B cell (primary cell): ENCODE measurements at regions of chr9 and their contacts with region 1.

Region 1: GRCh38 chr9:137223078-137223970 is 1.3 kb upstream of the RNF208 start:
- DNase-seq: peak; percentile 99
- ATAC-seq: peak; percentile 92
- H3K4me3 ChIP-seq: peak overlapping the region; percentile 36 to 77 (median 71)
- H3K4me3 Mint-ChIP-seq: peak overlapping the region; percentile 86
- H3K27ac ChIP-seq: peak overlapping the region; percentile 79 to 91
- H3K27ac Mint-ChIP-seq: peak overlapping the region; percentile 82
- H3K4me1 ChIP-seq: peaks cover 13 to 32% of the 10 kb centered on the region in 2 donors
- H3K4me1 Mint-ChIP-seq: peaks cover 16% of the 10 kb centered on the region
- H3K27me3 ChIP-seq: peaks cover 0 to 12% (median 0%) of the 10 kb centered on the region in 4 experiments
- H3K27me3 Mint-ChIP-seq: peaks cover 4% of the 10 kb centered on the region
- CTCF ChIP-seq: no peak

Region 2: DNA sequence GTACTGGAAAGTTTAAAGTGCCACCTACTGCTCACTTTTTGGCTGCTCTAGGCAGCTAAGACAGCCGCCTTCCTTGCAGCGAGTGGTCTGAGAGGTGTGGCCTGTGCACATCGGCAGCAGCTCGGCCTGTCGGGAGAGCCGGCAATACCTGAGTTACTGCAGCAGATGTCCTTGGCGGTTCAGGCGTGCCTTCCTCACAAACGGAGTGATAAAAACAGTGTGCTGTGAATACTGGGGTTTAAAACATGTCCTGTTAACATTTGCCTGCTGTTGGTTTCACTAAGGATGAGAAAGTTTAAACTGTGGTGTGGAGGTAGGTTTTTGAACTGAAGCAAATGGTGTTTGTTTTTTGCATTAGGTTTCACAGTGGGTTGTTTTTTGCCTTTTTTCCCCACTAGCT is 324.1 kb before region 1 on chr9:
- CTCF ChIA-PET with region 1: no interaction called
- POLR2A ChIA-PET with region 1: no interaction called
- intact Hi-C with region 1: no loop called
- DNase-seq: peak; percentile 38
- ATAC-seq: no peak
- H3K4me3 ChIP-seq: no peak overlapping the region
- H3K4me3 Mint-ChIP-seq: no peak overlapping the region
- H3K27ac ChIP-seq: peak overlapping the region in 1 of 2 donors; percentile 55
- H3K27ac Mint-ChIP-seq: peak overlapping the region; percentile 84
- H3K4me1 ChIP-seq: peaks cover 24 to 45% of the 10 kb centered on the region in 2 donors
- H3K4me1 Mint-ChIP-seq: peaks cover 48% of the 10 kb centered on the region
- H3K27me3 ChIP-seq: no peaks in the 10 kb centered on the region
- H3K27me3 Mint-ChIP-seq: no peaks in the 10 kb centered on the region
- CTCF ChIP-seq: no peak

Region 3: DNA sequence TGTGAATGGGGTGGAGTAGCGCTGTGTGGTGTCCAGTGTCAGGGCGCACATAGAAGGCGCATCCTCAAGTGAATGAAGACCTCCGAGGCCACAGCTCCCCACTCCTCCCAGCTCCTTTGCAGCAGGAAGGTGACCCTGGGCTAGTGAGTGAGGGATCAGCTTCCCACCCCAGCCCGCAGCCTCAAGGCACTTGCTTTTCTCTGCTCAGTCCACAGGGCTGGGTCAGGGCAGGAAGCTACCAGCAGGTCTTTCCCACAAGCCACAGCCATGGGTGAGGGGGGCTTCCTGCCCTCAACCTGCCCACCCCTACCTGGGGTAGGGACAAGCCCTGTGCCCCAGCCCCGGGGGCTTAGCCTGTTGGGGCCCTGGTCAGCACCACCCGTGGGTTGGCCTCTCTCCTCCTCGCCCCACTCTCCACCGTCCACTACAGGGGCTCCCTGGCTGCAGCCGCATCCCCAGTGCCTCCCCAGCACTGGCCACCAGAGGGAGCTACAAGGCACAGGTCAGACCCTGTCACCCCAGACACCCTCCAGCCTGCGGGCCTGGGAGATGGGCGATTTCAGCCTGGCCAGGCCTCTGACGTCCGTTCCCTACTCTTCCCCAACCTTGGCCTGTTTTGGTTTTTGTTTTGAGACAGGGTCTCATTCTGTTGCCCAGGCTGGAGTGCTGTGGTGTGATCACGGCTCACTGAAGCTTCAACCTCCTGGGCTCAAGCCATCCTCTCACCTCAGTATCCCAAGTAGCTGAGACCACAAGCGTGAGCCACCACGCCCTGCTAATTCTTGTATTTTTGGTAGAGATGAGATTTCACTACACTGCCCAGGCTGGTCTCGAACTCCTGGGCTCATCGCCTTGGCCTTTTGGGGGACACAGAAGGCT is 194.0 kb before region 1 on chr9:
- CTCF ChIA-PET with region 1: interaction called, 12 read pairs
- POLR2A ChIA-PET with region 1: interaction called, 5 read pairs
- intact Hi-C with region 1: no loop called
- DNase-seq: peak; percentile 85
- ATAC-seq: peak; percentile 31
- H3K4me3 ChIP-seq: peak overlapping the region; percentile 4 to 77 (median 66)
- H3K4me3 Mint-ChIP-seq: peak overlapping the region; percentile 90
- H3K27ac ChIP-seq: peak overlapping the region in 1 of 2 donors; percentile 71
- H3K27ac Mint-ChIP-seq: peak overlapping the region; percentile 92
- H3K4me1 ChIP-seq: peaks cover 61 to 78% of the 10 kb centered on the region in 2 donors
- H3K4me1 Mint-ChIP-seq: peaks cover 66% of the 10 kb centered on the region
- H3K27me3 ChIP-seq: no peaks in the 10 kb centered on the region
- H3K27me3 Mint-ChIP-seq: no peaks in the 10 kb centered on the region
- CTCF ChIP-seq: peak; percentile 87

Region 4: GRCh38 chr9:137095664-137096517 is 127.4 kb before region 1 on chr9:
- CTCF ChIA-PET with region 1: interaction called, 13 read pairs
- POLR2A ChIA-PET with region 1: no interaction called
- intact Hi-C with region 1: no loop called
- DNase-seq: peak; percentile 70
- ATAC-seq: peak; percentile 96
- H3K4me3 ChIP-seq: peak overlapping the region in 2 of 5 experiments; percentile 15 to 30
- H3K4me3 Mint-ChIP-seq: peak overlapping the region; percentile 72
- H3K27ac ChIP-seq: peak overlapping the region; percentile 41 to 44
- H3K27ac Mint-ChIP-seq: peak overlapping the region; percentile 72
- H3K4me1 ChIP-seq: peaks cover 0 to 12% of the 10 kb centered on the region in 2 donors
- H3K4me1 Mint-ChIP-seq: peaks cover 6% of the 10 kb centered on the region
- H3K27me3 ChIP-seq: no peaks in the 10 kb centered on the region
- H3K27me3 Mint-ChIP-seq: no peaks in the 10 kb centered on the region
- CTCF ChIP-seq: peak; percentile 49

Region 5: DNA sequence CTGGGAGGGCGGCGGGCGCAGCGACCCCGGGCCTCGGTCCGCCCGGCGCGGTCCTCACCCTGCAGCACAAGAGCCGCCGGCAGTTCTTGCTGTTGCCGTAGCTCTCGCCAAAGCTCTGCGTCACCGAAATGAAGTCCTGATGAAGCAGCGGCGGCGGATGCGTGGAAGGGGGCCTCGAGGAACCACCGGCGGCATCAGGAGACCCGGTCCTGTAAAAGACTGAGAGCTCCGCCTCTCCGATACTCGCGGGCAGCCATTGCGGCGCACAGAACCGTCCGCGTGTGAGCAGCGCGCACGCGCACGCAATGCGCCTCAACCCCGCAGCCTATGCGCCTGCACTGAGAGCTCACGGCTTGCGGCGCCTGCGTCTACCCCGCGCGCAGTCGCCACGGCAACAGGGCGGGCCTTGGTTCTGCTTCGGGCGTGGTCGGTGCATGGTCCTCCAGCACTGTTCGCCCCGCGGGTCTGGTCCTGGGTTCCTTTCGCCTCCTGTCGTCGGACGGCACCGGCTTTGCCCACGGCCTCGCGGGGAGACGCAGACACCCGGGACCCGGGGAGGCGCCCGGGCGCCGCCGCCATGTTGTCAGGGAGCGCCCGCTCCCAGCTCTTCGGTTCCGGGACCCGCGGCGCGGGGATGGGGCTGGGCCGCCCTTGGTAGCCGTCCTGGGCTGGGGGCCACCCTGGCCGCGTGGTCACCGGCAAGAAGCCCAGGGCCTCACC is 93.7 kb before region 1 on chr9:
- CTCF ChIA-PET with region 1: interaction called, 8 read pairs
- POLR2A ChIA-PET with region 1: interaction called, 10 read pairs
- intact Hi-C with region 1: no loop called
- DNase-seq: peak; percentile 94
- ATAC-seq: peak; percentile 93
- H3K4me3 ChIP-seq: peak overlapping the region; percentile 8 to 82 (median 73)
- H3K4me3 Mint-ChIP-seq: peak overlapping the region; percentile 89
- H3K27ac ChIP-seq: peak overlapping the region; percentile 71 to 93
- H3K27ac Mint-ChIP-seq: peak overlapping the region; percentile 91
- H3K4me1 ChIP-seq: peaks cover 28 to 32% of the 10 kb centered on the region in 2 donors
- H3K4me1 Mint-ChIP-seq: peaks cover 31% of the 10 kb centered on the region
- H3K27me3 ChIP-seq: peaks cover 0 to 3% (median 0%) of the 10 kb centered on the region in 4 experiments
- H3K27me3 Mint-ChIP-seq: peaks cover 4% of the 10 kb centered on the region
- CTCF ChIP-seq: no peak

Region 6: DNA sequence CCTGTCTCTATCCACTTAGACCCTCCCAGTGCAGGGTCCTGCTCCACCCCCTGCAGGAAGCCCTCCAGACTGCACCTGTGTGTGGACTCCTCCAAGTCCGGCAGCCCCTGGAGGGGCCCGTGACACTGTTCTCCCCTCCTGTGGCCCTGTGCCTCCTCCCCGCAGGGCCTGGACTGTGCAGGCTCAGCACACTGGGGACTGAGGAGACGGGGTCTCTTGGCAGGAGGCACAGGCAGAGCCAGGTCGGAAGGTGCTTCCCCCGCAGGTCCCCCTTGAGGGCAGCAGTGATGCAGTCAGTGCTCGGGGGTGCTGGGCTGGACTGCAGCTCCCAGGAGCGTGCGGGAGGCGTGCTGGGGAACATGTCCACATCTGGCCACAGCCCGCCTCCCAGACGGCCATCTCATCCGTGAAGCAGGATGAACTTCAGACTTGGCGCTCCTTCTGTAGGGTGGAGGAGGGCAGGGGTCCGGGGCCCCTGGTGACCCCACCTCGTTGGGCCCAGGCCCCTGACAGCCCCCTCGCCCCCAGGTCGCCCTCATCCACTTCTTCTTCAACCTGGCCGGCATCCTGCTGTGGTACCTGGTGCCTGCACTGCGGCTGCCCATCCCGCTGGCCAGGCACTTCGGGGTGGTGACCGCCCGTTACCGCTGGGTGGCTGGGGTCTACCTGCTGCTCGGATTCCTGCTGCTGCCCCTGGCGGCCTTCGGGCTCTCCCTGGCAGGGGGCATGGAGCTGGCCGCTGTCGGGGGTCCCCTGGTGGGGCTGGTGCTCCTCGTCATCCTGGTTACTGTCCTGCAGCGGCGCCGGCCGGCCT is 12.3 kb after region 1 on chr9:
- CTCF ChIA-PET with region 1: interaction called, 76 read pairs
- POLR2A ChIA-PET with region 1: interaction called, 11 read pairs
- intact Hi-C with region 1: loop called (anchors 1 kb)
- DNase-seq: peak; percentile 45
- ATAC-seq: no peak
- H3K4me3 ChIP-seq: no peak overlapping the region
- H3K4me3 Mint-ChIP-seq: peak overlapping the region; percentile 65
- H3K27ac ChIP-seq: peak overlapping the region in 1 of 2 donors; percentile 33
- H3K27ac Mint-ChIP-seq: peak overlapping the region; percentile 50
- H3K4me1 ChIP-seq: peaks cover 37 to 62% of the 10 kb centered on the region in 2 donors
- H3K4me1 Mint-ChIP-seq: peaks cover 35% of the 10 kb centered on the region
- H3K27me3 ChIP-seq: peaks cover 0 to 4% (median 0%) of the 10 kb centered on the region in 4 experiments
- H3K27me3 Mint-ChIP-seq: no peaks in the 10 kb centered on the region
- CTCF ChIP-seq: no peak

Region 7: DNA sequence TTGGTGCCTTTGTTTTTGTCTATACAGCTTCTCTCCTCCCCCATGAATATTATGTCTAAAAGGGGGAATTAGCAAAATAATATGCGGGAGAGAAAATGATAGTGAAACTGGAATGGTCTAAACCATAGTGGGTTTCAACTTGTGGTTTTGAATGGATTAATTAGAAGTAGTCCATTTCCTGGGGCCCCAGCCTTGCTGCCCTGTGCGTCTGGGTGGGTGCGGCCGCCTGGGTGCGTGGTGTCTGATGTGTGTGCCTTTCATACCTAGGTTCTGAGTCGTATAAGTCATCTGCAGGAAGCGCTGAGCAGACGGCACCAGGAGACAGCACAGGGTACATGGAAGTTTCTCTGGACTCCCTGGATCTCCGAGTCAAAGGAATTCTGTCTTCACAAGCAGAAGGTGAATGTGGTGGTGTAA is 534.3 kb after region 1 on chr9:
- CTCF ChIA-PET with region 1: no interaction called
- POLR2A ChIA-PET with region 1: interaction called, 10 read pairs
- intact Hi-C with region 1: no loop called
- DNase-seq: peak; percentile 76
- ATAC-seq: peak; percentile 18
- H3K4me3 ChIP-seq: peak overlapping the region in 2 of 5 experiments; percentile 13 to 23
- H3K4me3 Mint-ChIP-seq: peak overlapping the region; percentile 78
- H3K27ac ChIP-seq: peak overlapping the region; percentile 88
- H3K27ac Mint-ChIP-seq: peak overlapping the region; percentile 99
- H3K4me1 ChIP-seq: peaks cover 60% of the 10 kb centered on the region in 2 donors
- H3K4me1 Mint-ChIP-seq: peaks cover 63% of the 10 kb centered on the region
- H3K27me3 ChIP-seq: no peaks in the 10 kb centered on the region
- H3K27me3 Mint-ChIP-seq: no peaks in the 10 kb centered on the region
- CTCF ChIP-seq: no peak

Region 8: GRCh38 chr9:137989999-137990715 is 766.8 kb after region 1 on chr9:
- CTCF ChIA-PET with region 1: no interaction called
- POLR2A ChIA-PET with region 1: no interaction called
- intact Hi-C with region 1: no loop called
- DNase-seq: no peak
- ATAC-seq: no peak
- H3K4me3 ChIP-seq: no peak overlapping the region
- H3K4me3 Mint-ChIP-seq: no peak overlapping the region
- H3K27ac ChIP-seq: no peak overlapping the region
- H3K27ac Mint-ChIP-seq: no peak overlapping the region
- H3K4me1 ChIP-seq: no peaks in the 10 kb centered on the region
- H3K4me1 Mint-ChIP-seq: no peaks in the 10 kb centered on the region
- H3K27me3 ChIP-seq: peaks cover 0 to 13% (median 6%) of the 10 kb centered on the region in 4 experiments
- H3K27me3 Mint-ChIP-seq: peaks cover 71% of the 10 kb centered on the region
- CTCF ChIP-seq: no peak